Brain microvascular endothelial cell (primary cell): ENCODE measurements at regions of chr15 and their contacts with region 1.

Region 1: DNA sequence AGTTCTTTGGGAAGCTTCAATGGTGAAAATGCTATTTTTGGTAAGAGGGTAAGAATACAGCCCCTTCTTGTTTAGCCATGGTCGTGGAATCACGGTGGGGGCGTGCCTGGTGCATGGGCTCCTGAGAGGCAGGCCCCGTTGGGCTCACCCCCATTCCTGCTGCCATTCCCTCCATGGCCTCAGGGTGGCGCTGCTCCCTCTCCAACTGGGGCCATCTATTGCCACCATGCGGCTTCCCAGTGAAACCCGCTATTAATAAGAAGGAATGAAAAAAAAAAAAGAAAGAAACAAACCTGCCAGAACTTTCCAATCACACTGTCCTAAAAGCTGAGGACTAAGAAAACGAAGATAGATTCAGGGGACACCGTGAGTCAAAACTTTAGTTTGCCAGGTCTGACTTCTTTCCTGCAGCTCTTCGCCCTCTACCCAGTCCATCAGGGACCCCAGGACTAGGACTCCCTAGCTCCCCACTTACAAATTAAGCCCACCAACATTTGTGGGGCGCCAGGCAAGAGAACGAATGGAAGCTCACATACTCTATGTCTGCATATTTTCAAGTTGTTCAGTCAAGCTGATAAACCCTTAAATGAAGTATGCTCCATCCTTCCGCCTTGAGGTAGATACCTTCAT is 30.6 kb upstream of the ABHD2 start:
- DNase-seq: peak; percentile 81
- H3K4me3 ChIP-seq: no peak overlapping the region
- H3K27ac ChIP-seq: no peak overlapping the region
- H3K27me3 ChIP-seq: no peaks in the 10 kb centered on the region
- CTCF ChIP-seq: peak; percentile 99

Region 2: GRCh38 chr15:89167267-89168176 is 109.9 kb after region 1 on chr15:
- in situ Hi-C with region 1: loop called (anchors 10 kb)
- DNase-seq: peak; percentile 33
- H3K4me3 ChIP-seq: no peak overlapping the region
- H3K27ac ChIP-seq: peak overlapping the region; percentile 33
- H3K27me3 ChIP-seq: no peaks in the 10 kb centered on the region
- CTCF ChIP-seq: no peak

Region 3: GRCh38 chr15:89543389-89543788 is 485.8 kb after region 1 on chr15:
- in situ Hi-C with region 1: no loop called
- DNase-seq: no peak
- H3K4me3 ChIP-seq: no peak overlapping the region
- H3K27ac ChIP-seq: no peak overlapping the region
- H3K27me3 ChIP-seq: no peaks in the 10 kb centered on the region
- CTCF ChIP-seq: no peak